ENCODE measurements at regions of chr5 and their contacts with region 1.

Region 1: DNA sequence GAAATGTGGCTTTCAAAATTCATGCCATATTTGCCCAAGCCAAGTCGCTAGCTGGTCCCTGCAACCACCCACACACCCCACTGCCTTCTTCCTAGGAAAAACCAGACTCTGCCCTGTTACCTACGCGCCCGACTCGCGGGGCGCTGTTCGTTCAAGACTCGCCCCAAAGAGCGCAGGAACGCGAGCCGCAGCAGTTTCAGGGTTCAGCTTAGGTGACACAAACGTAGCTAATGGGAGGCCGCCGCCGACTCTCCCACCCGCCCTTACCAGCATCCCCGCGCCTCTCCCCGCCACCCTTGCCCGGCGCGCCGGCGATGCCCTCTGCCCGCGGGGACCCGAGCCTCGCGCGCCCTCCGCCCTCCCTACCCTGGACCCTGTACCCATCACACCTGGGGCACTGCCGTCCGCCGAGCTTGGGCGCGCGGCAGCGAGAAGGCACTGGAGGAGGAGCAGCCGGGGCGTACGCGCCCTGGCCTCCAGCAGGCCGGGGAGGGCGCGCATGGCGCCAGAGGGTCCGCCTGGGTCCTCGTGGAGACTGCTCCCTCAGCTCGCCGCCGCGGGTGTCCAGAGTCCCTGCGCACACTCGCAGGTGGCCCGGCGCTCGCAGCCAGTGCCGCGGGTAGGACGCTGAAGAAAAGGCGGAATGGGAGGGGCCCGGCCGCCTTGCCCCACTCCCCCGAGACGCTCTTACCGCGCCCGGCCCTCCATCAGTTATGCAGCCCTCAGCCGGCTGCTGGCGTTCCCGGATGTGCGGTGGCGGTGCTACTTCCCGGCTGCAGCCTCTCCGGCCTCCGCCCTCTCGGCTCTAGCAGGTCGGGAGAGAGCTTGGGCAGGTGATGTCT is at the start of gene EMB:
- DNase-seq: peak; percentile 65 to 88 (median 79)
- ATAC-seq: peak; percentile 80
- H3K4me3 ChIP-seq: peak within 1 kb of the TSS; percentile 73
- H3K4me3 Mint-ChIP-seq: peak within 1 kb of the TSS; percentile 88 to 99 (median 94)
- H3K27ac ChIP-seq: peak within 1 kb of the TSS; percentile 89
- H3K27ac Mint-ChIP-seq: peak within 1 kb of the TSS; percentile 96 to 99 (median 97)
- H3K4me1 ChIP-seq: peaks cover 36 to 44% of the 10 kb centered on the region in 2 donors
- H3K4me1 Mint-ChIP-seq: peaks cover 40 to 88% (median 74%) of the 10 kb centered on the region in 7 donors
- H3K27me3 ChIP-seq: no peaks in the 10 kb centered on the region
- H3K27me3 Mint-ChIP-seq: no peaks in the 10 kb centered on the region
- total RNA-seq, gene EMB: 124 to 169 (median 159) TPM

Region 2: GRCh38 chr5:50406874-50407273 is 34.0 kb before region 1 on chr5:
- CTCF ChIA-PET with region 1: no interaction called
- POLR2A ChIA-PET with region 1: interaction called, 5 read pairs
- intact Hi-C with region 1: loop called in 1 of 2 experiments (anchors 5 kb)
- DNase-seq: no peak
- ATAC-seq: no peak
- H3K4me3 ChIP-seq: no peak overlapping the region
- H3K4me3 Mint-ChIP-seq: no peak overlapping the region
- H3K27ac ChIP-seq: no peak overlapping the region
- H3K27ac Mint-ChIP-seq: peak overlapping the region in 1 of 9 donors; percentile 32
- H3K4me1 ChIP-seq: peaks cover 7 to 19% of the 10 kb centered on the region in 2 donors
- H3K4me1 Mint-ChIP-seq: peaks cover 19 to 75% (median 60%) of the 10 kb centered on the region in 7 donors
- H3K27me3 ChIP-seq: no peaks in the 10 kb centered on the region
- H3K27me3 Mint-ChIP-seq: no peaks in the 10 kb centered on the region

Region 3: DNA sequence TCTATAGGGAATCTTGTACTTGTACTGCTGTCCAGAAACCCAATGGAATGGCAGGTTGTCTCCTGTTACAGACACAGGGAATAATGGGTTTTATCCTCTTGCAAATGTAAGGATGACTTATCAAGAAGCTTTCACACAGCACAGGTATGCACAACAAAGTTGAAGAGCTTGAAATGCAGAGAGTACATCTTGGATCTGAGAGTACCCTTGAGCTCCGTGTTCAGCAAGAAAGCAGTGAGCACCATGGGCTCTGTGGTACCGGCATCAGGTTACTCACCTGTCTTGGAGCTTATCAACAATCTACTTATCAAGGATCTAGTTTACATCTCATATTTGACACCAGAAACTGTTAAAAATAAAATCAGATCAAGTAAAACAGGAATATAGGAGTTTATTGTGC is 22.2 kb after region 1 on chr5:
- CTCF ChIA-PET with region 1: interaction called, 3 read pairs
- POLR2A ChIA-PET with region 1: no interaction called
- intact Hi-C with region 1: loop called in 1 of 2 experiments (anchors 1 kb)
- DNase-seq: no peak
- ATAC-seq: no peak
- H3K4me3 ChIP-seq: no peak overlapping the region
- H3K4me3 Mint-ChIP-seq: no peak overlapping the region
- H3K27ac ChIP-seq: no peak overlapping the region
- H3K27ac Mint-ChIP-seq: no peak overlapping the region
- H3K4me1 ChIP-seq: peaks cover 0 to 8% of the 10 kb centered on the region in 2 donors
- H3K4me1 Mint-ChIP-seq: peaks cover 7 to 15% (median 12%) of the 10 kb centered on the region in 7 donors
- H3K27me3 ChIP-seq: no peaks in the 10 kb centered on the region
- H3K27me3 Mint-ChIP-seq: no peaks in the 10 kb centered on the region

Region 4: GRCh38 chr5:50564079-50564478 is 123.2 kb after region 1 on chr5:
- CTCF ChIA-PET with region 1: no interaction called
- POLR2A ChIA-PET with region 1: no interaction called
- intact Hi-C with region 1: loop called in 1 of 2 experiments (anchors 5 kb)
- DNase-seq: peak in 7 of 9 donors; percentile 1 to 59 (median 18)
- ATAC-seq: peak; percentile 77
- H3K4me3 ChIP-seq: no peak overlapping the region
- H3K4me3 Mint-ChIP-seq: peak overlapping the region in 8 of 10 donors; percentile 26 to 71 (median 48)
- H3K27ac ChIP-seq: no peak overlapping the region
- H3K27ac Mint-ChIP-seq: peak overlapping the region in 4 of 9 donors; percentile 7 to 76 (median 47)
- H3K4me1 ChIP-seq: peaks cover 0 to 29% of the 10 kb centered on the region in 2 donors
- H3K4me1 Mint-ChIP-seq: peaks cover 6 to 53% (median 35%) of the 10 kb centered on the region in 7 donors
- H3K27me3 ChIP-seq: no peaks in the 10 kb centered on the region
- H3K27me3 Mint-ChIP-seq: peaks cover 0 to 3% (median 0%) of the 10 kb centered on the region in 5 donors

Region 5: DNA sequence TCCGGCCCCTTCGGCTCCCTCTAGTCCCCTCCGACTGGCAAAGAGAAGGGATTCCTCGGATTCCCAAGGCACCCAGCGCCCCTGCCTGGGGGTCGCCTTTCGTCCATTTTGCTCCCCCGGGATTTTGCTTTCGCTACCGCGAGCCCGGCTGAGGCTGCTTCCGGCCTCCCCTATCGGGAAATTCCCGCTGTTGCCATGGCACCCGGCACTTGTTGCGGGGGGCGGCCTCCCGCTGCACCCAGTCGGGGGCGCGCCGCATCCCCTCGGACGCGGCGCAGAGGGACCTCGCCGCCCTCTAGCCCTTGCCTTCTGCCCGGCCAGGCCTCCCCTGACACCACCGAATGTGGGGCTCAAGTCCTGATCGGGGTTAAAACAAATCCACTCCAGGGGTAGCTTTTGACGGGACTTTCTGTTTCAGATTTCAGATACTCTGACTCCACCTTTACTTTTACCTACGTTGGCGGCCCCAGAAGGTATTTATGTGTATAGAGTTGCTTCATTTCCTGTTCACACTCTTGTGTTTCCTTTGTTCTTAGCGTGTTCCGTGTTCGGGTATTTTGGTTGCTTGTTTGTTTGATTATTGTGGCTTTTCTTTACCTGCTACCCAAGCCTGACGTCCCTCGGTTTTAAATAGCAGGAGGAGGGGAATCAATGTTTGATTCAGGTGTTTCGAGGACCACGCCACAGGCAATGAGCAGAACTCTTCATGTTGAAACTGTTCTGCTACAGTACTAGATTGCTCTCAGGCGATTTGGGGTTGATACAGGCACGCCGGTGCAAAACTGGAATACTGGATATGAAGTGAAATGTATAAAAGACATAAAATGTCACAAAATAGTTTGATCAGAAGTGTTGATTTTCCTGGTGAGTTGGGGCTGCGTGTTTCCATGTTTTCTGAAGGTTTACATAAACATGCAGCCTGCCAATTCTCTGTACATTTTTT is 227.1 kb after region 1 on chr5:
- CTCF ChIA-PET with region 1: interaction called, 3 read pairs
- POLR2A ChIA-PET with region 1: interaction called, 7 read pairs
- intact Hi-C with region 1: loop called (anchors 1 kb)
- DNase-seq: peak; percentile 80 to 95 (median 89)
- ATAC-seq: peak; percentile 79
- H3K4me3 ChIP-seq: peak overlapping the region; percentile 96
- H3K4me3 Mint-ChIP-seq: peak overlapping the region; percentile 92 to 99 (median 98)
- H3K27ac ChIP-seq: peak overlapping the region; percentile 97
- H3K27ac Mint-ChIP-seq: peak overlapping the region; percentile 97 to 100 (median 98)
- H3K4me1 ChIP-seq: peaks cover 23 to 37% of the 10 kb centered on the region in 2 donors
- H3K4me1 Mint-ChIP-seq: peaks cover 42 to 76% (median 70%) of the 10 kb centered on the region in 7 donors
- H3K27me3 ChIP-seq: no peaks in the 10 kb centered on the region
- H3K27me3 Mint-ChIP-seq: peaks cover 0 to 2% (median 0%) of the 10 kb centered on the region in 5 donors

Region 6: DNA sequence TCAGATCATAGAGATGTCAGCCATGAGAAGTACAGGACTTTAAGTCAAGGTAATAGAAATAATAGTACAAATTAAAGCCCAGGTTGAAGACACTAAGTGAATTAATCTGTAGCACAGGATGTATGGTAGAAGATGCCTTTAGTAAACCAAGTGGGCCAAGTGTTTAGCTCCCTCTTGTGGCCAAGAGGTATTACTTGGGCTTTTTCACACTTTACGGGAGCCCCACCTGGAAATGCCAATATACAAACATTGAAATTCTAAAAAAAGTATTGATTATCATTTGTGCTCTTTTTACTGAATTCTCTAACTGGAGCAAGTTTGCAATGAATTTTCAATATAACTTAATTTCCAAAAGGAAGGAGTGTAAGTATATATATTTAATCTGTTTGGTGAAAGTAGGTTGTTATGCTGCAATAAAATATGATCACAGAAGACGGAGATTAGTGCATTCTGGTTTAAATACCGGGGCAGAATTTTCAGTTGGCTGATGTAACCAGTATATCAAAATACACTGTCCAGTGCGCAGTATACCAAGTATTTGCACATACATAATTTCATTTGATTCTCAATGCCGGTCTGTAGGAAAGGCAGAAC is 310.3 kb after region 1 on chr5:
- CTCF ChIA-PET with region 1: interaction called, 7 read pairs
- POLR2A ChIA-PET with region 1: interaction called, 11 read pairs
- intact Hi-C with region 1: loop called (anchors 1 kb)
- DNase-seq: peak in 7 of 9 donors; percentile 58 to 79 (median 69)
- ATAC-seq: peak; percentile 99
- H3K4me3 ChIP-seq: no peak overlapping the region
- H3K4me3 Mint-ChIP-seq: peak overlapping the region in 9 of 10 donors; percentile 37 to 69 (median 61)
- H3K27ac ChIP-seq: no peak overlapping the region
- H3K27ac Mint-ChIP-seq: peak overlapping the region; percentile 68 to 92 (median 89)
- H3K4me1 ChIP-seq: peaks cover 27 to 32% of the 10 kb centered on the region in 2 donors
- H3K4me1 Mint-ChIP-seq: peaks cover 36 to 75% (median 61%) of the 10 kb centered on the region in 7 donors
- H3K27me3 ChIP-seq: no peaks in the 10 kb centered on the region
- H3K27me3 Mint-ChIP-seq: no peaks in the 10 kb centered on the region

Region 7: DNA sequence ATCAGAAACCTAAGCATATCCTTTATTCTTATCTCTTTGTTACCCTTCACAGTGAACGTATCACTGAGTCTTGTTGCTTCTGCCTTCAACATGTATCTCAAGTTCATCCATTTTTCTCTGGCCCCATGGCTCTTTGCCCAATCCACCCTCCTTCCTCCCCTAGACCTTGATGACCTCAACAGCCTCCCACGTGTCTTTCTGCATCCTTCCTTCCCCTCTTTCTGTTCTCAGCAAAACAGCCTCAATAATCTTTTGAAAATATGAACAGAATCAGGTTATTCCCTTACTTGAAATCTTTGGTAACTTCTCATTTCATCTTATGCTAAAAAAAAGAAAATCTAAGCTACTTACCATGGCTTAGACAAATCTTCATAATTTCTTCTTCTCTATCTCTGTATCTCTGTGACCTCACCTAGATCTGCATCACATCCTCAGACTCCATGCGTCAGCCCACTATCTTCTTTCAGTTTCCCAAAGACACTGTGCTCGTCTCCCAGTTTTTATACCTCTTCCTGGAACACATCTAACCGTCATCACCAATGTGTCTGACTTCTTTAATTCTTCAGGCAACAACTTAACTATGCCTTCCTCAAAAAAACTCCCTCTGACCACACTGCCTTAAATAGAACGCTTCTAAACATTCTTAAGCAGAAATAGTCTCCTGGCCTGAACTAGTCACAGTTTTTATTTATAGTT is 433.6 kb after region 1 on chr5:
- CTCF ChIA-PET with region 1: no interaction called
- POLR2A ChIA-PET with region 1: no interaction called
- intact Hi-C with region 1: no loop called
- DNase-seq: peak in 1 of 9 donors; percentile 6
- ATAC-seq: peak; percentile 41
- H3K4me3 ChIP-seq: no peak overlapping the region
- H3K4me3 Mint-ChIP-seq: peak overlapping the region in 1 of 10 donors; percentile 31
- H3K27ac ChIP-seq: no peak overlapping the region
- H3K27ac Mint-ChIP-seq: peak overlapping the region in 1 of 9 donors; percentile 1
- H3K4me1 ChIP-seq: no peaks in the 10 kb centered on the region
- H3K4me1 Mint-ChIP-seq: peaks cover 6 to 18% (median 8%) of the 10 kb centered on the region in 7 donors
- H3K27me3 ChIP-seq: no peaks in the 10 kb centered on the region
- H3K27me3 Mint-ChIP-seq: peaks cover 5 to 29% (median 18%) of the 10 kb centered on the region in 5 donors